ENCODE measurements at regions of chr12 and their contacts with region 1.

Region 1: GRCh38 chr12:26017484-26018206 is 59.2 kb downstream of the RASSF8 start:
- DNase-seq: peak; percentile 18
- H3K4me3 Mint-ChIP-seq: no peak overlapping the region
- H3K27ac Mint-ChIP-seq: no peak overlapping the region
- H3K4me1 Mint-ChIP-seq: no peaks in the 10 kb centered on the region
- H3K27me3 Mint-ChIP-seq: no peaks in the 10 kb centered on the region

Region 2: DNA sequence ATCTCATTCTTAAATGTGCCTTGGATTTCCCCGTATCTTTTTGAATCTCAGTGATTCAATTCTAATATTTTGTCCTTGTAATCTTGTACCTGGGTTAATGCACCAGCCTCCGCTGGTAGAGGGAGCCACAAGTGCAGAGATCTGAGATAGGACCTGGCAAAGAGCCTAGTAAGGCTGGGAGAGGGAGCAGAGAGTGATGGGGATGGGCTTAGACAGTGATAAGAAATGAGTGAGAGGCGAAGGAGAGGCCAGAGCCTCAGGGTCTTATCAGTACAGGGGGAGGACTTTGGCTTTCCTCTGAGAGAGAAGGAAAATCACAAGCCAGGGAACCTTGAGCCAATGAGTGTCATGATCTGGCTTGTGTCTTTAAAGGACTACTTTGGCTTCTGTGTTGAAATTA is 434.1 kb before region 1 on chr12:
- CTCF ChIA-PET with region 1: no interaction called
- intact Hi-C with region 1: loop called (anchors 2 kb)
- DNase-seq: peak; percentile 21
- H3K4me3 Mint-ChIP-seq: no peak overlapping the region
- H3K27ac Mint-ChIP-seq: no peak overlapping the region
- H3K4me1 Mint-ChIP-seq: no peaks in the 10 kb centered on the region
- H3K27me3 Mint-ChIP-seq: no peaks in the 10 kb centered on the region

Region 3: DNA sequence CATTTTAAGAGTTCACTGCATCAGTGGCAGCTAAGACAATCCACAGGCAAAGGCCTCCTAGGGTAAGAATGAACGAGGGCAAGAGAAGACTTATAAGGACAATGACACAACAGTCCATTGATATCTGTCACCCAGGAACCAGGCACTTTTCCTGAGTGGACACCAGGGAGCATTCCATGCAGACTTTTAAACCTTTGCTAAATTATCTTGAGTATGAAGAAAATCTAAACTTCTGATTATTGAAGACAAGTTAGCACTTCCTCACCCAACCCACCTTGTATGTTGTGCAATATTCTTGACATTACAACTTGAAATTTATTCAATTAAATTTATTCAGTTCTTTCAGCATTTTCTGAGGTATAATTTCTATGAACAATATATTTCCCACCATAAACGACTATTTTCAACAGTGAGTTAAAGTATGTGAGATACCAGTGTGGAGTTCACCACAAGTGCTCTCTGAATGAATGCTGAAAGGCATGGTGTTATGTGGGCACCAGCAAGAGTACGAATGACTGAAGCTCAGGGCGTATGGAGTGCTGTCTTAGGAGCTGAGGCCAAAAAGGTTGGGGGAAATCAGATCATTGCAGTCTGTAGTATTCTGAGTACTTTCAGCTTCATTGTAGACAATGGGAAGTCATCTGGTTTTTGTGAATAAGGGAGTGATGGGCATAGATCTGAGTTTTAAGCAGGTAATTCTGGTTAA is 340.3 kb before region 1 on chr12:
- CTCF ChIA-PET with region 1: no interaction called
- intact Hi-C with region 1: loop called (anchors 5 kb)
- DNase-seq: no peak
- H3K4me3 Mint-ChIP-seq: no peak overlapping the region
- H3K27ac Mint-ChIP-seq: no peak overlapping the region
- H3K4me1 Mint-ChIP-seq: no peaks in the 10 kb centered on the region
- H3K27me3 Mint-ChIP-seq: no peaks in the 10 kb centered on the region

Region 4: GRCh38 chr12:26044012-26044383 is 26.4 kb after region 1 on chr12:
- CTCF ChIA-PET with region 1: no interaction called
- intact Hi-C with region 1: no loop called
- DNase-seq: no peak
- H3K4me3 Mint-ChIP-seq: no peak overlapping the region
- H3K27ac Mint-ChIP-seq: no peak overlapping the region
- H3K4me1 Mint-ChIP-seq: no peaks in the 10 kb centered on the region
- H3K27me3 Mint-ChIP-seq: peaks cover 3% of the 10 kb centered on the region

Region 5: DNA sequence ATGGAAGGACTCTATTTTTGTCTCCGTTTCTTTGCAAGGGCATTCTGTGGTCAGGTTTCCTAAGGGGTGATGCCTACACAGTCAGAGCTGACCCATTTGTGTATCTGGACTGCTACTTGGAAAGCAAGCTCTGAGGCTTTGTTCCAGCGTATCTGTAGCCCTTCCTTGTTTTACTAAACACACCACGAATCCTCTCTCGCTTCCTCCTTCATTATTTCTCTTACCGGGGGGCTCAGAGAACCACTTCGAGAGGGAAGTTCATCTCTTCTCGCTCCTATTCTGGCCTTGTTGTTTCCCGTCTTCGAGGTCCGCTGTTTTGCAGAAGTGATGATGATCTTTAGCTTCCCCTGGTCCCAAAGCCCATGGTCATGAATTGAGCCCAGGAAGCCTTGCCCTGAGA is 342.4 kb after region 1 on chr12:
- CTCF ChIA-PET with region 1: no interaction called
- intact Hi-C with region 1: no loop called
- DNase-seq: no peak
- H3K4me3 Mint-ChIP-seq: no peak overlapping the region
- H3K27ac Mint-ChIP-seq: no peak overlapping the region
- H3K4me1 Mint-ChIP-seq: no peaks in the 10 kb centered on the region
- H3K27me3 Mint-ChIP-seq: no peaks in the 10 kb centered on the region

Measured in activated naive CD4-positive, alpha-beta T cell treated with anti-CD3 and anti-CD28 coated beads for 36 hours (primary cell).